ENCODE measurements at regions of chr3 and their contacts with region 1.

Region 1: GRCh38 chr3:50611464-50612233 is at the start of gene CISH:
- DNase-seq: peak; percentile 80 to 91
- H3K4me3 ChIP-seq: peak within 1 kb of the TSS; percentile 65
- H3K27ac ChIP-seq: no peak within 1 kb of the TSS
- H3K4me1 ChIP-seq: peaks cover 18% of the 10 kb centered on the region
- H3K27me3 ChIP-seq: no peaks in the 10 kb centered on the region
- CTCF ChIP-seq: no peak; the same call in 1 of the 2 replicates
- total RNA-seq, gene CISH: 2.7 and 3.2 TPM in 2 replicates

Region 2: GRCh38 chr3:50350527-50351322 is 260.9 kb before region 1 on chr3 and contains the starts of genes CYB561D2 and NPRL2:
- CTCF ChIA-PET with region 1: interaction called, 3 read pairs
- POLR2A ChIA-PET with region 1: no interaction called
- intact Hi-C with region 1: loop called (anchors 2 kb)
- DNase-seq: peak; percentile 89 to 98
- H3K4me3 ChIP-seq: peak within 1 kb of the TSS; percentile 79
- H3K27ac ChIP-seq: 0 out of 2 replicates have a peak within 1 kb of the TSS, but pooled peaks have one; percentile 45
- H3K4me1 ChIP-seq: peaks cover 17% of the 10 kb centered on the region; the same call in 1 of the 2 replicates
- H3K27me3 ChIP-seq: no peaks in the 10 kb centered on the region
- CTCF ChIP-seq: no peak
- total RNA-seq, gene CYB561D2: 15.7 and 19.3 TPM in 2 replicates
- total RNA-seq, gene NPRL2: 24.1 and 25.4 TPM in 2 replicates

Region 3: DNA sequence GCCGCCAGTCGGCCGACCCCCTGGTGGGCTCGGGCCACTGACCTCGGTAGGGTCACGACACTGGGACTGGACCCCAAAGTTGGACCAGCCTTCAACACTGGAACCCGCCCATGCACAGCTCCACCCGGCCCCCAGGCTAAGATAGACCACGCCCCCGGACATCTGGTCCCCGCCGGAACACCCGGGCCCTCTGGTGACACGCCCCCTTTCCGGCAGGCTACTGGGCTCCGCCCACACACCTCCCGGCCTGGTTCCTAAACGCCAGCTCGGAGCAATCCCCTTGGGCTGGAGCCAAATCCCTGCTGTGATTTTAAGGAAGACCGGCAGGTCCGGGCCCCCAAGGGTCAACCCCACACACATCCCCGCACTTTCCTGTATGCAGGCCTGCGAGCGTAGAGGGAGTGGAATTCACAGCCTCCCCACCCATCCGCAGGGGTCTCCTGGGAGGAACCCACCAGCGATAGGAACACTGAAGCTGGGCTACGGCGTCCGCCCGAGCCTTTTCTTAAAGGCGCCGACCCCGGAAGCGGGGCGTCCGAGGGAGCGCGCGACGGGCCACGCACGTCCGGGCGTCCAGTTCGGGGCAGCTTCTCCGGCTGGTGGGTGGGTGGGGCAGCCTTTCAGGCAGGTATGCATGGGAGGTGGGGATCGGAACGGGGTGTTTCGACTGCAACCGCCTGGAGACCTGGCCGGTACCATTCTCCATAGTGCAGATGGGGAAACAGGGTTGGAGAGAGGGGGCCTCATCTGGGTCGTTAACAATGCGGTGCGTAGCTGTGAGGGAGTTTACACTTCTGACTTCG is 42.5 kb before region 1 on chr3 and contains the start of gene HEMK1:
- CTCF ChIA-PET with region 1: interaction called, 6 read pairs
- POLR2A ChIA-PET with region 1: interaction called, 6 read pairs
- intact Hi-C with region 1: loop called (anchors 1 kb)
- DNase-seq: peak; percentile 82 to 96
- H3K4me3 ChIP-seq: peak within 1 kb of the TSS; percentile 94
- H3K27ac ChIP-seq: 0 out of 2 replicates have a peak within 1 kb of the TSS, but pooled peaks have one; percentile 24
- H3K4me1 ChIP-seq: peaks cover 13% of the 10 kb centered on the region
- H3K27me3 ChIP-seq: no peaks in the 10 kb centered on the region
- CTCF ChIP-seq: no peak
- total RNA-seq, gene HEMK1: 20.6 and 24.2 TPM in 2 replicates

Region 4: DNA sequence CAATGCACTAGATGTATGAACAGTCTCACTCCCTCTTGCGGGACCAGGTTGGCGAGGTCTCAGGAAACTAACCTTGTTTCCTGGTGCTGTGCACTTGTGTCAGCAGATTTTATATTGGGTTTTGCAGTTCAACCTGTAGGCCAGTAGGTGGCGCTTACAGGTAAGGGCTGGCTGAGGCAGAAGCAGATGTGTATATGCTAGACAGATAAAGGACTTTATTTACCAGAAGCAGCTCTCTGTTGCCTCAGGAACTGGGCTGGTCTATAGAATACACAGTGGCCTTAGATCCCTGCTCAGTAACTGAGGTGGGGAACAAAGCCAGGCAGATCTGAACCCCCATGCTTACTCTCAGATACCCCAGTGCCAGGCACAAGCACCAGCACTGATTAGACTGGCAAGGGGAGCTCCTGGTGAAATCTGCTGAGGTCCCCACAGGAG is 359.9 kb after region 1 on chr3:
- CTCF ChIA-PET with region 1: no interaction called
- POLR2A ChIA-PET with region 1: no interaction called
- intact Hi-C with region 1: loop called (anchors 5 kb)
- DNase-seq: peak; percentile 56 to 68
- H3K4me3 ChIP-seq: no peak overlapping the region
- H3K27ac ChIP-seq: no peak overlapping the region
- H3K4me1 ChIP-seq: no peaks in the 10 kb centered on the region; the same call in 1 of the 2 replicates
- H3K27me3 ChIP-seq: no peaks in the 10 kb centered on the region
- CTCF ChIP-seq: peak; percentile 89

Region 5: GRCh38 chr3:51391075-51391567 is 779.5 kb after region 1 on chr3 and contains the start of gene RBM15B:
- CTCF ChIA-PET with region 1: no interaction called
- POLR2A ChIA-PET with region 1: no interaction called
- intact Hi-C with region 1: loop called (anchors 1 kb)
- DNase-seq: peak; percentile 79 to 97
- H3K4me3 ChIP-seq: peak within 1 kb of the TSS; percentile 68
- H3K27ac ChIP-seq: peak within 1 kb of the TSS; percentile 41
- H3K4me1 ChIP-seq: peaks cover 50% of the 10 kb centered on the region
- H3K27me3 ChIP-seq: no peaks in the 10 kb centered on the region
- CTCF ChIP-seq: no peak; the same call in 1 of the 2 replicates
- total RNA-seq, gene RBM15B: 29.1 and 29.4 TPM in 2 replicates

Measured in PC-9 (cell line).